ENCODE measurements at regions of chr15 and their contacts with region 1.

Region 1: GRCh38 chr15:50182219-50183013 is 420 bp downstream of the SLC27A2 start:
- DNase-seq: peak in 3 of 4 experiments; percentile 40 to 50 (median 46)
- ATAC-seq: peak; percentile 80
- H3K4me3 ChIP-seq: peak overlapping the region; percentile 65
- H3K27ac ChIP-seq: peak overlapping the region; percentile 38; the same call in 1 of the 3 replicates
- H3K4me1 ChIP-seq: peaks cover 16 to 21% of the 10 kb centered on the region in 2 experiments; a peak in 4 of 5 replicates
- H3K27me3 ChIP-seq: no peaks in the 10 kb centered on the region
- CTCF ChIP-seq: no peak
- EP300 ChIP-seq: no peak
- POLR2A ChIP-seq: no peak
- RAD21 ChIP-seq: no peak

Region 2: GRCh38 chr15:50095938-50096821 is 86.2 kb before region 1 on chr15:
- CTCF ChIA-PET with region 1: no interaction called
- POLR2A ChIA-PET with region 1: no interaction called
- in situ Hi-C with region 1: no loop called
- intact Hi-C with region 1: no loop called
- DNase-seq: no peak
- ATAC-seq: 0 out of 3 replicates have a peak, but pooled peaks have one; percentile 36
- H3K4me3 ChIP-seq: no peak overlapping the region
- H3K27ac ChIP-seq: no peak overlapping the region
- H3K4me1 ChIP-seq: no peaks in the 10 kb centered on the region
- H3K27me3 ChIP-seq: no peaks in the 10 kb centered on the region
- CTCF ChIP-seq: no peak
- EP300 ChIP-seq: no peak
- POLR2A ChIP-seq: no peak
- RAD21 ChIP-seq: no peak

Region 3: GRCh38 chr15:50169095-50169411 is 13.4 kb before region 1 on chr15:
- CTCF ChIA-PET with region 1: no interaction called
- POLR2A ChIA-PET with region 1: interaction called, 11 read pairs
- in situ Hi-C with region 1: no loop called
- intact Hi-C with region 1: no loop called
- DNase-seq: no peak
- ATAC-seq: no peak
- H3K4me3 ChIP-seq: no peak overlapping the region
- H3K27ac ChIP-seq: no peak overlapping the region
- H3K4me1 ChIP-seq: peaks cover 0 to 4% of the 10 kb centered on the region in 2 experiments; a peak in 2 of 5 replicates
- H3K27me3 ChIP-seq: no peaks in the 10 kb centered on the region
- CTCF ChIP-seq: no peak
- EP300 ChIP-seq: no peak
- POLR2A ChIP-seq: no peak
- RAD21 ChIP-seq: no peak

Region 4: GRCh38 chr15:50424066-50424890 is 241.9 kb after region 1 on chr15 and contains the start of gene USP8:
- CTCF ChIA-PET with region 1: no interaction called
- POLR2A ChIA-PET with region 1: no interaction called
- in situ Hi-C with region 1: no loop called
- intact Hi-C with region 1: loop called (anchors 5 kb)
- DNase-seq: peak; percentile 92 to 99 (median 94)
- ATAC-seq: peak; percentile 97
- H3K4me3 ChIP-seq: peak within 1 kb of the TSS; percentile 76
- H3K27ac ChIP-seq: peak within 1 kb of the TSS; percentile 90
- H3K4me1 ChIP-seq: peaks cover 4 to 10% of the 10 kb centered on the region in 2 experiments; a peak in 4 of 5 replicates
- H3K27me3 ChIP-seq: no peaks in the 10 kb centered on the region
- CTCF ChIP-seq: no peak
- EP300 ChIP-seq: peak; percentile 7; the same call in 1 of the 2 replicates
- POLR2A ChIP-seq: peak; percentile 95
- RAD21 ChIP-seq: no peak
- polyA plus RNA-seq, gene USP8: 43.9 to 44.8 TPM